HCT116 (cell line): ENCODE measurements at regions of chr1 and their contacts with region 1.

Region 1: GRCh38 chr1:164510435-164510834 is 48.5 kb upstream of the PBX1 start:
- DNase-seq: no peak
- ATAC-seq: no peak; the same call in 1 of the 2 replicates
- H3K4me3 ChIP-seq: no peak overlapping the region
- H3K27ac ChIP-seq: no peak overlapping the region
- H3K4me1 ChIP-seq: no peaks in the 10 kb centered on the region
- H3K27me3 ChIP-seq: no peaks in the 10 kb centered on the region; the same call in 1 of the 2 replicates
- CTCF ChIP-seq: no peak; a peak in 1 of 6 replicates
- POLR2A ChIP-seq: no peak
- RAD21 ChIP-seq: peak; percentile 64

Region 2: DNA sequence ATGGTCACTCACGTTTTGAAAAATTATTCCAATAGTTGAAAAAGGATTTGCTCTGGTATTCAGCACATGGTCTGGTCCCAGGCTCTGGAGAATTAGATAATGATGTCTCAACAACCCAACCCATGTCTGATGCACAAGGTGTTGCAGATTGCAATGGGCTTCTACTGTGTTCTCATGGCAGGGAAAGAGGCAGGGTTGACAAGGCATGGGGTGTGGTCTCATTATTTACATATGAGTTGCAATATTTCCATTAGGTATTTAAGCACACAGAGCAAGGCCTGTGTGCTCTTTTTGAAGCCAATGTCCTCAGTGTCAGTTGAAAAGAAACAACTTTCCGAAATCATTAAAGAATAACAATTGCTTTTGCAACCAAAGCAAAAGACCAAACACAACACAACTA is 333.3 kb before region 1 on chr1:
- CTCF ChIA-PET with region 1: no interaction called
- POLR2A ChIA-PET with region 1: no interaction called
- RAD21 ChIA-PET with region 1: no interaction called
- intact Hi-C with region 1: loop called (anchors 10 kb)
- DNase-seq: no peak
- ATAC-seq: no peak
- H3K4me3 ChIP-seq: no peak overlapping the region
- H3K27ac ChIP-seq: no peak overlapping the region
- H3K4me1 ChIP-seq: no peaks in the 10 kb centered on the region
- H3K27me3 ChIP-seq: no peaks in the 10 kb centered on the region
- CTCF ChIP-seq: no peak
- POLR2A ChIP-seq: no peak
- RAD21 ChIP-seq: no peak